Activated naive CD4-positive, alpha-beta T cell treated with anti-CD3 and anti-CD28 coated beads for 36 hours (primary cell): ENCODE measurements at regions of chr10 and their contacts with region 1.

Region 1: GRCh38 chr10:11986593-11987216 is 55.9 kb downstream of the UPF2 start:
- DNase-seq: peak; percentile 88
- H3K4me3 Mint-ChIP-seq: no peak overlapping the region
- H3K27ac Mint-ChIP-seq: no peak overlapping the region
- H3K4me1 Mint-ChIP-seq: peaks cover 5% of the 10 kb centered on the region
- H3K27me3 Mint-ChIP-seq: no peaks in the 10 kb centered on the region

Region 2: DNA sequence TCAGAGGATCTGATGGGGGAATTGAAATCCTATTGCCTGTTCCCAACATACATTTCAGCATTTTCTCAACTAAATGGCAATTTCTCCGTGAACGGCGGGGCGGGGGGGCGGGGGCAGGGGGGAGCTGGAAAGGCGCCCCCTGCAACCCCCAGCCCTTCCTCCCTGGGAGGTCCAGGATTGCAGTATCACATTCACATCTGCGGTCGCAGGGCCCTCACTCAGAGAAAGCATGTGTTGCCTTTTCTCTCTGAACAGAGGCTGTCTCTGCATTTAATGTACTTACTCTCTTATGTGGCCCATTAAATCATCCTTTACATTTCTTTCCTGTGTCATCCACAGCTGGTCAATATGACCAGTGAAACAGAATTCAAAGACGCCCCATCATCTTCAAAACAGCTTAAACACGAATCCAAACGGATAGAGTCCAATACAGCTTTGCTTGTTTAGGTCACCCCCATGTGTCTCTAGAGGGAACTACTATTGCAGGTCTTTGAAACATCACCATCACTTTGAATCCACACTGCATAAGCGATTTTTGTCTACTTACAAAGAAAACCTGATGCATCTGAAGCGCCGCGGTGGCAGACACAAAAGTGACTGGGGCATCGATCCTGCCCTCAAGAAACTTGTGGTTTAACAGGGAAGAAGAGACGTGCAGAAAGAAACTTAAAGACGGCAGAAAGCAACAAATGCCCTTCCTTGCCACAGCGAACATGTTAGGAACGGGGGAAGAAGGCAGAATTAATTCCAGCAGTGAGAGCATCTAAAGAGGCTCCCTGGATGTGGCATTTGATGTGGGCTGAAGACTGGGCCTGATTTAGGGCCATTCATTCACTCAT is 261.5 kb before region 1 on chr10:
- CTCF ChIA-PET with region 1: no interaction called
- intact Hi-C with region 1: no loop called
- DNase-seq: peak; percentile 26
- H3K4me3 Mint-ChIP-seq: no peak overlapping the region
- H3K27ac Mint-ChIP-seq: no peak overlapping the region
- H3K4me1 Mint-ChIP-seq: peaks cover 5% of the 10 kb centered on the region
- H3K27me3 Mint-ChIP-seq: peaks cover 2% of the 10 kb centered on the region

Region 3: DNA sequence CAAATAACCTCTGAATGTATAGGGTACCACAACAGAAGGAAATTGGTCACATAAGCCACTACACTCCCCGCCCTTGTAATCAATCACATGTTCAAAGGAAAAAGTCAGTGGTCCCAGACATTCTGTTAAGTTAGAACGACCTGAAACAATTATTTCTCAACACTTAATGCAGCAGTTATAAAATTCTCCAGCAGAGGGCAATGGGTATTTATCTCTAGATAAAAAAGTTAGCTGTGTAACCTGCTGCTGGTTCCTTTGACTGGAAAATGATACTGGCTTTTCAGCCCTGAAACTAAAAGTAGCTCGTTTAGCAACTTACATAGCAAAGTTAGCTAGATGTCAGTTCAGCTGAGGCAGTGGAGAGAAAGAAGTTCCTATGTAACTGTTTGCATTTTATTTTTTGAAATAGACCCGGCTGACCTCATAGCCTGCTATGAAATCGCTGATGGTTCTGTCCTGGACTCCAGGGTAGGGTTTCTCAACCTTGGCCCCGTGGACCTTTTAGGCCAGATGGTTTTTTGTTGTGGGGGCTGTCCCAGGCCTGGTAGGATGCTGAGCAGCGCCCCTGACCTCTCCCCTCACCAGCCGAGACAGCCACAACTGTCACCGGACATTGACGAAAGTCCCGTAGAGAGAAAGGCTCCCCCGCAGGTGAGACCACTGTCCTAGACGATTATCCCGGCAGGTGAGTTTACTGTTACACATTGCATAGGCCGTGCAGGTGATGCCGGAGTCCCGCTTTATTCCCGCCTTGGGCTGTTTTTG is 203.7 kb before region 1 on chr10:
- CTCF ChIA-PET with region 1: interaction called, 22 read pairs
- intact Hi-C with region 1: loop called (anchors 1 kb)
- DNase-seq: peak; percentile 9
- H3K4me3 Mint-ChIP-seq: no peak overlapping the region
- H3K27ac Mint-ChIP-seq: no peak overlapping the region
- H3K4me1 Mint-ChIP-seq: peaks cover 8% of the 10 kb centered on the region
- H3K27me3 Mint-ChIP-seq: no peaks in the 10 kb centered on the region

Region 4: DNA sequence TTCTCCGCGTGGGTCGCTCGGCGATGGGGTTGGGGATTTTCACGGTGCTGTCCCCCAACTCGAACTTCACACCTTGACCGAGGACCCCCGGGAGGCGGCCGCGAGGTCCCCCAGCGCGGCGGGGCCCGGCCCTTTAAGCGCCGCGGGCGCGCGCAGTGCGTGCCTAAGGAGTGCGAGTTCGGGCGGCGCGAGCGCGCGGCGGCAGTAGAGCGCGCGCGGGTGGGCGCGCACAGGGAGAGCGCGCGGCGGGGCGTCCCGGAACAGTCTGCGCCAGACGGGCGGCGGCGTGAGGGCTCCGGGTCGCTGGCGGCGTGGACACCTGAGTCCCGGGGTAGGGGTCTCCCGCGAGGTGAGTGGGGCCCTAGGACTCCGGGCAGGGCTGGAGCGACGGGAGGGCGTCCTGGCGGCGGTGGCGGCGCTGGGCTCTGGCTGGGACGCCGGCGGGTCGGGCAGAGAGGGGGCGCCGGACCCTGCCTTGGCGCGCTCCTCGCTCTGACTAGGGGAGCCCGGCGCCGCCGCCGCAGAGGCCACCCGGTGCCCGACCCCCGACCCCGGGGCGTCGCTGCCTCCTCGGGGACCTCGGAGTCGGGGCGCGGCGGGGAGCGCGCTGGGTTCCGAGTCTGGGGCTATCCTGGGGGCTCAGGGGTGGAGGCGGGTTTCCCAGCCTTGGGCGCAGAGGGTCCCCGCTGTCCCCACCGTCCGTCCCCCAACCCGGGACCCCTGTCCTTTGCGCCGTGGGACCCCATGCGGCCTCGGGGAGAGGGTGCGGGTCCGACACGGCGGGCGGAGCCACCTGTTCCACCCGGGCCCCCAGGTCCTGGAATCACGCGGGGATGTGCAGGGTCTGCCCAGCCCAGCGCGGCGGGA is 163.3 kb before region 1 on chr10 and contains the start of gene PROSER2:
- CTCF ChIA-PET with region 1: interaction called, 4 read pairs
- intact Hi-C with region 1: loop called (anchors 2 kb)
- DNase-seq: peak; percentile 21
- H3K4me3 Mint-ChIP-seq: peak within 1 kb of the TSS; percentile 71
- H3K27ac Mint-ChIP-seq: no peak within 1 kb of the TSS
- H3K4me1 Mint-ChIP-seq: peaks cover 7% of the 10 kb centered on the region
- H3K27me3 Mint-ChIP-seq: peaks cover 37% of the 10 kb centered on the region
- total RNA-seq, gene PROSER2: 0.57 to 0.83 TPM

Region 5: DNA sequence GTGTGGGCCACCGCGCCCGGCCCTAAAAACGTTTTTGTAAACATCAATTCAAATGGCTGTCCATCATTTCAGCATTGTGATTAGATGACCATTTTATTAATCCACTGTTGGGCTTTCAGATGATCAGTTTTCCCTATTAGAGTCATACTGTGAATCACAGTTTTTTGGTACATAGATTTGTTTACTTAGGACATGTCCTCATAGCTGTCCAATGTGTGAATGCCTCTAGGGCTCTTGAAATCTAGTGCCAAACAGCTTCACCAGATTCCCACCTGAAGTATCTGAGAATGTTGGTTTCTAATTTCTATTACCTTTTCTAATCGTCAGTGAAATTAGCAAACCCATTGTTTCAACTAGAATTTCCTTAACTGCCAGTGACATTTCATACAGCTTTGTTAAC is 10.9 kb before region 1 on chr10:
- CTCF ChIA-PET with region 1: interaction called, 11 read pairs
- intact Hi-C with region 1: no loop called
- DNase-seq: no peak
- H3K4me3 Mint-ChIP-seq: no peak overlapping the region
- H3K27ac Mint-ChIP-seq: no peak overlapping the region
- H3K4me1 Mint-ChIP-seq: no peaks in the 10 kb centered on the region
- H3K27me3 Mint-ChIP-seq: no peaks in the 10 kb centered on the region